ENCODE measurements at regions of chr10 and their contacts with region 1.

Region 1: GRCh38 chr10:26725837-26726727 is 28.6 kb downstream of the PDSS1 start:
- DNase-seq: peak; percentile 82
- ATAC-seq: peak; percentile 70

Region 2: DNA sequence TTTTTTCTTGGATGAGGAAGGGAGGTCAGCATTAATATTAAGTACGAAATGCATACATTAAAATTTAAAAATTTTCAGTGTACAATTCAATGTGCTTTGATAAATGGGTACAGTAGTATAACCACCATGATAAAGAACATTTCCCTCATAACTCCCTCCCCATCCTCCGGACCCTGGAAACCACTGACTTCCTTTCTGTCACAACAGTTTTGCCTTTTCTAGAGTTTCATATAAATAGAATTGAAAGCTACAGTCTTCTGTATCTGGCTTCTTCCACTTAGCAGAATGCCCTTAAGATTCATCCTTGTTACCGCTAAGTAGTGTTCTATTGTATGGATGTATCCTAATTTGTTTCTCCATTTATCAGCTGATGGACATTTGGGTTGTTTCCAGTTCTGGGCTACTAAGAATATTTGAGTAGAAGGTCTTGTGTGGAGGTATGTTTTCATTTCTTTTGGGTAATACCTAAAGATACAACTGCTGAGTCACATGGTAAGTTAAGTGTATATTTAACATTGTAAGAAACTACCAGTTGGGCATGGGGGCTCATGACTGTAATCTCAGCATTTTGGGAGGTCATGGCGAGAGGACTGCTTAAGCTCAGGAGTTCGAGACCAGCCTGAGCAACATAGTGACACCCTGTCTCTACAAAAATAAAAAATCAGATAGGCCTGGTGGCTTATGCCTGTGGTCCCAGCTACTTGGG is 103.9 kb after region 1 on chr10:
- intact Hi-C with region 1: no loop called
- DNase-seq: no peak
- ATAC-seq: no peak

Region 3: GRCh38 chr10:26879740-26880139 is 153.7 kb after region 1 on chr10:
- intact Hi-C with region 1: loop called (anchors 5 kb)
- DNase-seq: no peak
- ATAC-seq: no peak

Region 4: DNA sequence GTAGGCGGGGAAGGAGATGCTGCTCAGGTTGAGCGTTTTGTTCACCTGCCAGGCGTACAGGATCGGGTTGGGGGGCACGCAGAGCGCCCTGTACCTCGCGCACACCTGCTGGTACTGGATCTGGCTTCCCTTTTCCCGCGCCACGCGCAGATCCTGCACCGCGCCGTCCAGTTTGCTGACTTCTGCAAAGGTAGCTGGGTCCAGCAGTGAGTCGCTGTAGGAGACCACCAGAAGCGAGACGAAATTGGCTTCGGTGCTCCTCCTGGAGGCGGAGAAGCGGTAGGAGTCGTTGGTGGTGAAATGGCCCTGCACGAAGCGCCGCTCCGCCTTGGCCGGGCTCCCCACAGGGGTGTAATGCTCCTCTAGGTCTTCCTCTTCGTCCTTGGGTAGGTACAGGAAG is 687.3 kb after region 1 on chr10:
- intact Hi-C with region 1: no loop called
- DNase-seq: no peak
- ATAC-seq: no peak

Measured in sciatic nerve (tissue), 2 donors.